CD8-positive, alpha-beta T cell (primary cell): ENCODE measurements at regions of chr12 and their contacts with region 1.

Region 1: GRCh38 chr12:6461401-6462233 is 8.9 kb downstream of the VAMP1 start:
- DNase-seq: peak; percentile 58 to 97 (median 86)
- ATAC-seq: peak; percentile 77
- H3K4me3 ChIP-seq: peak overlapping the region; percentile 32 to 36
- H3K4me3 Mint-ChIP-seq: peak overlapping the region; percentile 78
- H3K27ac ChIP-seq: peak overlapping the region; percentile 84 to 96
- H3K27ac Mint-ChIP-seq: peak overlapping the region; percentile 99
- H3K4me1 ChIP-seq: peaks cover 87% of the 10 kb centered on the region
- H3K4me1 Mint-ChIP-seq: peaks cover 86% of the 10 kb centered on the region
- H3K27me3 ChIP-seq: no peaks in the 10 kb centered on the region
- H3K27me3 Mint-ChIP-seq: no peaks in the 10 kb centered on the region
- CTCF ChIP-seq: no peak

Region 2: DNA sequence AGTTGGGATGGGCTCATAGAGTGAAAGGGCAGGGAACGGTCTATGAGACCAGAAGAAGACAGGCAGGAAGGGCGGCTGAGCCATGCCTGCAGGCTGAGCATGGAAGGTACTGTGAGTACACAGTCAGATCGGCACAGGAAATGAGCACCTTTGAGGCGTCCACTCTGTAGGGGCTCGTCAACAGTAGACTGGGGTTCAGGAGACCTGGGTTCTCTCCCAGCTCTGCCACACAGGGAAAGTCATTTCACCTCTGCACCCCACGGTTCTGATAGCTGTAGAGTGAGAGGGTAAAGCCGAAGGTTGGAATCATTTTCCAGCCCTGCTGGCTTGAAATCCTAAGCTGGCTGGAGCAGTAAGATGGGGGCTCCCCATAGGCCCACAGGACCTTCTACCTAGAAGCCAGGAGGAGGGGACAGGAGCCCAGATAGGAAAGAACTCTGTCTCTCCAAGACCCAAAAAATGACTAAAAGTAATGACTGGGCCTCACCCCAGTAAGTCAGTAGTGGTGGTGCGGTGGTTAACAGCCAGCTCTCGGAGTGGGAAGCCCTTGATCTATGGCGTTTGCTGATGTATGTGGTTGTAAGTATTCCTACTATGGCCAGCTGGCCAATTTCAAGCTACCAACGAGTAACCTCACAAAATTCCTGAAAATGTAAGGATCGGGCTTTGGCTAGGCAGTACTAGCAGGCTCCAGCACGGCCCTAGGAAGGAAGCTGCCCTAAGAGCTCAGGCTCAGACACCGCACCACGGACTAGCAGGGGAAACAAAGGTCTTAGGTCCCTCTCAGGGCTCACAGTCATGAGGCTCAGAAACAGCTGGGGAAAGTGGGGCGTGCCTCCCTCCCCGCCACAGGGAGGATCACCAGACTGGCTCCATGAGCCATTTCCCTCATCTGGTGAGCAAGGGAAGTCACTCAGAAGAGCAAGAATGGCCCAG is 27.1 kb before region 1 on chr12:
- CTCF ChIA-PET with region 1: interaction called, 29 read pairs
- POLR2A ChIA-PET with region 1: interaction called, 315 read pairs
- intact Hi-C with region 1: no loop called
- DNase-seq: peak in 5 of 9 experiments; percentile 44 to 73 (median 57)
- ATAC-seq: peak; percentile 83
- H3K4me3 ChIP-seq: peak overlapping the region in 1 of 2 experiments; percentile 38
- H3K4me3 Mint-ChIP-seq: peak overlapping the region; percentile 66
- H3K27ac ChIP-seq: peak overlapping the region; percentile 31 to 74
- H3K27ac Mint-ChIP-seq: peak overlapping the region; percentile 93
- H3K4me1 ChIP-seq: peaks cover 33% of the 10 kb centered on the region
- H3K4me1 Mint-ChIP-seq: peaks cover 48% of the 10 kb centered on the region
- H3K27me3 ChIP-seq: no peaks in the 10 kb centered on the region
- H3K27me3 Mint-ChIP-seq: no peaks in the 10 kb centered on the region
- CTCF ChIP-seq: no peak

Region 3: DNA sequence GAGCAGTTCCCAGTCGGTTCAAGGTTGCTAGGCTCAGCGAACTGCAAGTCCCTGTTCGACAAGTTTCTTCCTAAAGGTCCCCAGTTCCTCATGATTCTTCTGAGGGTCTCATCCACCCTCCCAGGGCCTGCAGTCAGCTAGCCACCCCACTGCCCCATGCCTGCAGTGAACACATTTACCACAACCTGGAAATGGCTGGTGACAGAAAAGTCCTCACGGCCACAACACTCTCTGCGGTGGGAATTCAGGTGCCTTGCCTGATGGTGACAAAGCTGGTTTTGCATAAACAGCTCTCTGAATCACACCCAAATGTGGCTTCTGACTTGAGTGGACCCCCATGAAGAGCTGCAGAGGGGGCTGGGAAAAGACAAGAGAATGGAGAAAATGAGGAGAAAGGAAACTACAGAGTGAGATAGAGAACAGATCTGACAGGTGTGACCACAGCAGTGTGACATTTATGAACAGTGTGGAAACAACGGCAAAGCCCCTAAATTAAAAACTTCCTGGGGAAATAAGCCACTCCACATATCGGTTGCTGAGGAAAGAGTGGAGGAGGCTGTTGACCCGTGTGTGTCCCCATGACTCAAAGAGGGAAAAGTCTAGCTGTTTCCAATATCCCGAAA is 18.1 kb before region 1 on chr12:
- CTCF ChIA-PET with region 1: interaction called, 64 read pairs
- POLR2A ChIA-PET with region 1: interaction called, 315 read pairs
- intact Hi-C with region 1: loop called in 1 of 2 experiments (anchors 1 kb)
- DNase-seq: peak in 4 of 9 experiments; percentile 44 to 65 (median 48)
- ATAC-seq: peak; percentile 30
- H3K4me3 ChIP-seq: peak overlapping the region in 1 of 2 experiments; percentile 2
- H3K4me3 Mint-ChIP-seq: peak overlapping the region; percentile 99
- H3K27ac ChIP-seq: peak overlapping the region; percentile 19 to 58
- H3K27ac Mint-ChIP-seq: peak overlapping the region; percentile 93
- H3K4me1 ChIP-seq: peaks cover 38% of the 10 kb centered on the region
- H3K4me1 Mint-ChIP-seq: peaks cover 67% of the 10 kb centered on the region
- H3K27me3 ChIP-seq: no peaks in the 10 kb centered on the region
- H3K27me3 Mint-ChIP-seq: no peaks in the 10 kb centered on the region
- CTCF ChIP-seq: no peak

Region 4: GRCh38 chr12:6451348-6452244 is 10.0 kb before region 1 on chr12 and contains the start of gene TAPBPL:
- CTCF ChIA-PET with region 1: interaction called, 64 read pairs
- POLR2A ChIA-PET with region 1: interaction called, 315 read pairs
- intact Hi-C with region 1: loop called (anchors 1 kb)
- DNase-seq: peak; percentile 50 to 96 (median 79)
- ATAC-seq: peak; percentile 88
- H3K4me3 ChIP-seq: peak within 1 kb of the TSS; percentile 68 to 82
- H3K4me3 Mint-ChIP-seq: peak within 1 kb of the TSS; percentile 99
- H3K27ac ChIP-seq: peak within 1 kb of the TSS; percentile 85 to 95
- H3K27ac Mint-ChIP-seq: peak within 1 kb of the TSS; percentile 99
- H3K4me1 ChIP-seq: peaks cover 63% of the 10 kb centered on the region
- H3K4me1 Mint-ChIP-seq: peaks cover 82% of the 10 kb centered on the region
- H3K27me3 ChIP-seq: no peaks in the 10 kb centered on the region
- H3K27me3 Mint-ChIP-seq: no peaks in the 10 kb centered on the region
- CTCF ChIP-seq: no peak
- total RNA-seq, gene TAPBPL: 11.8 to 12.2 TPM

Region 5: GRCh38 chr12:6554168-6555017 is 92.8 kb after region 1 on chr12:
- CTCF ChIA-PET with region 1: interaction called, 6 read pairs
- POLR2A ChIA-PET with region 1: no interaction called
- intact Hi-C with region 1: loop called in 1 of 2 experiments (anchors 5 kb)
- DNase-seq: peak; percentile 55 to 81 (median 71)
- ATAC-seq: peak; percentile 61
- H3K4me3 ChIP-seq: peak overlapping the region; percentile 70 to 96
- H3K4me3 Mint-ChIP-seq: peak overlapping the region; percentile 87
- H3K27ac ChIP-seq: no peak overlapping the region
- H3K27ac Mint-ChIP-seq: peak overlapping the region; percentile 58
- H3K4me1 ChIP-seq: peaks cover 35% of the 10 kb centered on the region
- H3K4me1 Mint-ChIP-seq: peaks cover 49% of the 10 kb centered on the region
- H3K27me3 ChIP-seq: no peaks in the 10 kb centered on the region
- H3K27me3 Mint-ChIP-seq: no peaks in the 10 kb centered on the region
- CTCF ChIP-seq: peak; percentile 50